MCF 10A (cell line): ENCODE measurements at regions of chr12 and their contacts with region 1.

Region 1: DNA sequence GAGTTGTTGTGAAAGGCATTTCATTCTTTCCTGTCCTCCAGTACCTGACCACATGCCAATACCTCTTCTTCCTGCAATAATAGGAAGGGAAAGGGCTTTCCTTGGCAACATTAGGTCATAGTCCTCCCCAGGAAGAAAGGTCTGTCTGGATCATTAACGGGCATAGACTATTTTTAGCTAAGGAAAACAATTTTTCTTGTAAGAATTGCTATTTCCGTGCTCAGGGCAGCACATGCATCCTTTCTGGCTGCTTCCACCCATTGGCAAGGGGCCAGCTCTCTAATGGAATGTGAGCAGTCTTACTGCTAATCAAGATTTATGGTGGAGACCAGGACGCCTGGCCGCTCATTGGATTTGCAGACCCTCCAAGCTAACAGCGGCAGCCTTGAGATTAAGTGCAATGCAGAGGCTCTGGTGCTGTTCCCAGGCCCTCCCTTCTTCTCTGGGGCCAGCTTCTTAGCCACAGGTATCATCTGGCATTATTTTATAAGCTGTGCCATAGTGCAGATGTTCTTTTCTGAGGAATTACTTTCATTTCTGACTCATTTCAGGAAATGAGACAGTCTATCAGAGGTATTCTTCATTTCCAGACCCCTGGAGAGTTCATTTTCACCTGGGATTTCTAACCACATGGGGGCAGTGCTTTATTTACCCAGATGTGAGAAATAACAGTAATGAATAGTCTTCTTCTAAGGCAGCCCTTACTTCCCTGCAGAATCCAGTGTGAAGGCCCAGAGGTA is 52.9 kb downstream of the ANO6 start:
- DNase-seq: peak; percentile 89
- H3K4me3 Mint-ChIP-seq: peak overlapping the region; percentile 58
- H3K27ac Mint-ChIP-seq: peak overlapping the region; percentile 61
- H3K4me1 Mint-ChIP-seq: peaks cover 21% of the 10 kb centered on the region
- H3K27me3 Mint-ChIP-seq: no peaks in the 10 kb centered on the region
- CTCF ChIP-seq: peak; percentile 63

Region 2: GRCh38 chr12:44532940-44533339 is 735.9 kb before region 1 on chr12:
- CTCF ChIA-PET with region 1: no interaction called
- POLR2A ChIA-PET with region 1: no interaction called
- intact Hi-C with region 1: no loop called
- DNase-seq: no peak
- H3K4me3 Mint-ChIP-seq: no peak overlapping the region
- H3K27ac Mint-ChIP-seq: no peak overlapping the region
- H3K4me1 Mint-ChIP-seq: no peaks in the 10 kb centered on the region
- H3K27me3 Mint-ChIP-seq: peaks cover 22% of the 10 kb centered on the region
- CTCF ChIP-seq: no peak

Region 3: DNA sequence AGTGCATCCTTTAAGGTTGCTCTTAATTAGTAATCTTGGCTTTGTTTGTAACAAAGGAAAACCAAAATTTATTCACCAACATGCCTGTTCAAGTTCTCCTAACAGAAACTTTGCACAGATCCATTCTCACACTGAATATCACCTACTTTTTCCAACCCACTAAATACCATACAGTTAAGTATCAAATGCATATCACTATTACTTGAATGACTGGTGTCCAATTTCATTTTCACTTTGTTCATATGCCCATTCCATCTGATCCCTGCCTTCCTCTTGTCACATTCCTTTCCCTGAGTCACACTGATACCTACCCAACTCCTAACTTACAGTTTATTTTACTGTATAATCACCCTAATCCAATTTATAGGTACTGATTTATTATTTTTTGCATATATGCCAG is 679.1 kb before region 1 on chr12:
- CTCF ChIA-PET with region 1: no interaction called
- POLR2A ChIA-PET with region 1: no interaction called
- intact Hi-C with region 1: no loop called
- DNase-seq: peak; percentile 16
- H3K4me3 Mint-ChIP-seq: no peak overlapping the region
- H3K27ac Mint-ChIP-seq: no peak overlapping the region
- H3K4me1 Mint-ChIP-seq: peaks cover 7% of the 10 kb centered on the region
- H3K27me3 Mint-ChIP-seq: peaks cover 47% of the 10 kb centered on the region
- CTCF ChIP-seq: no peak

Region 4: GRCh38 chr12:44689587-44689986 is 579.3 kb before region 1 on chr12:
- CTCF ChIA-PET with region 1: no interaction called
- POLR2A ChIA-PET with region 1: no interaction called
- intact Hi-C with region 1: no loop called
- DNase-seq: no peak
- H3K4me3 Mint-ChIP-seq: no peak overlapping the region
- H3K27ac Mint-ChIP-seq: no peak overlapping the region
- H3K4me1 Mint-ChIP-seq: no peaks in the 10 kb centered on the region
- H3K27me3 Mint-ChIP-seq: peaks cover 12% of the 10 kb centered on the region
- CTCF ChIP-seq: no peak

Region 5: DNA sequence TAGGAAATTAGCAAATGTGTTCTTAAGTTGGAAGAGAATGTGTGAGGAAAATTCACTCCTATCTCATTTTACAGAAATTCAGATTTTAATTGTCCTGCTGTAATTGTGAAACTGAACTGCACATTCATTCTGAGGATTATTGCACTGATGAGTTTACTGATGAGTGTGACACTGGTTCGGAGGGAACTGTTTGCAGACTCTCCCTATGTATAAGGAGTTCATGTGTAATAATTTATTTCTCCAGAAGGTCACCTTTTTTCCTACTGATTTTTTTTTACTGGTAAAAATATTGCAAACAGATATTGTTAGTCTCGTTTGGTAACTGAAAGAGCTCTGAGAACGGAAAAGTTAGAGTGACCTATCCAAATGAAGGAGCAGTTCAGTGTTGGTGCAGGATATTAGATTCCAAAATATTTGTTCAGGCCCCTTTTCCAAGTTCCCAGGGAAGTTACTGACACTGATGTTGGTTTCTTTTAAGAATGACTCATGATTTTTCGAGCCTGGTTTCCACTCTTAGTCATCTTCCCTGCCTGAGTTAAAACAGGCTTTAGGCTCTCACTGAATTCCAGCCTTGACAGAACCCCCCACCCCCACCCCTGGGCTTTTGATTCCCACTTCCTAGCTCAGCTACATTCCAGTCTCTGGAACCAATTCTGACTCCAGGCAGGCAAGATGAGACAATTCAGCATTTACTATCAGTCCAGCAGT is 34.5 kb before region 1 on chr12:
- CTCF ChIA-PET with region 1: interaction called, 3 read pairs
- POLR2A ChIA-PET with region 1: interaction called, 21 read pairs
- intact Hi-C with region 1: loop called (anchors 2 kb)
- DNase-seq: peak; percentile 96
- H3K4me3 Mint-ChIP-seq: peak overlapping the region; percentile 5
- H3K27ac Mint-ChIP-seq: peak overlapping the region; percentile 77
- H3K4me1 Mint-ChIP-seq: peaks cover 36% of the 10 kb centered on the region
- H3K27me3 Mint-ChIP-seq: no peaks in the 10 kb centered on the region
- CTCF ChIP-seq: no peak

Region 6: GRCh38 chr12:45290204-45290580 is 21.4 kb after region 1 on chr12:
- CTCF ChIA-PET with region 1: interaction called, 11 read pairs
- POLR2A ChIA-PET with region 1: interaction called, 6 read pairs
- intact Hi-C with region 1: no loop called
- DNase-seq: peak; percentile 94
- H3K4me3 Mint-ChIP-seq: peak overlapping the region; percentile 18
- H3K27ac Mint-ChIP-seq: peak overlapping the region; percentile 54
- H3K4me1 Mint-ChIP-seq: peaks cover 18% of the 10 kb centered on the region
- H3K27me3 Mint-ChIP-seq: no peaks in the 10 kb centered on the region
- CTCF ChIP-seq: no peak

Region 7: GRCh38 chr12:45315462-45315861 is 46.6 kb after region 1 on chr12:
- CTCF ChIA-PET with region 1: no interaction called
- POLR2A ChIA-PET with region 1: no interaction called
- intact Hi-C with region 1: no loop called
- DNase-seq: no peak
- H3K4me3 Mint-ChIP-seq: no peak overlapping the region
- H3K27ac Mint-ChIP-seq: no peak overlapping the region
- H3K4me1 Mint-ChIP-seq: no peaks in the 10 kb centered on the region
- H3K27me3 Mint-ChIP-seq: no peaks in the 10 kb centered on the region
- CTCF ChIP-seq: no peak

Region 8: DNA sequence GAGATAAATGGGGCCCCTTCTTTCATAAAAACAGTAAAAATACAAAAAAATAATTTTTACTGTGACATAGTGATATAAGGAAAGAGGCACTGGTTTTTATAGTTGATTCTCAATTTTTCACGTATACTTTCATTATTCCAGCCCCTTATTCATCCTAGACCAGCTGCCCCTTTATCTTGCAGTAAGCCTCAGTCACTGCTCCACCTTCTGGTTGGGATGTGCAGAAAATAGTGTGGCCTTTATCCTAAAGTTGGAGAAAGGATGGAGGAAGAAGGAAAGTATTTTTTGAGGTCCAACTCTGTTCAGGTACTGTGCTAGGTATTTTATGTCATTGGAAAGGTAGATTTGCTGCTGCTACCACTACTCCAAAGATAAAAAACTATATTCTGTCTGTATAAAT is 119.7 kb after region 1 on chr12:
- CTCF ChIA-PET with region 1: interaction called, 25 read pairs
- POLR2A ChIA-PET with region 1: no interaction called
- intact Hi-C with region 1: loop called (anchors 1 kb)
- DNase-seq: peak; percentile 48
- H3K4me3 Mint-ChIP-seq: no peak overlapping the region
- H3K27ac Mint-ChIP-seq: no peak overlapping the region
- H3K4me1 Mint-ChIP-seq: no peaks in the 10 kb centered on the region
- H3K27me3 Mint-ChIP-seq: no peaks in the 10 kb centered on the region
- CTCF ChIP-seq: peak; percentile 50

Region 9: DNA sequence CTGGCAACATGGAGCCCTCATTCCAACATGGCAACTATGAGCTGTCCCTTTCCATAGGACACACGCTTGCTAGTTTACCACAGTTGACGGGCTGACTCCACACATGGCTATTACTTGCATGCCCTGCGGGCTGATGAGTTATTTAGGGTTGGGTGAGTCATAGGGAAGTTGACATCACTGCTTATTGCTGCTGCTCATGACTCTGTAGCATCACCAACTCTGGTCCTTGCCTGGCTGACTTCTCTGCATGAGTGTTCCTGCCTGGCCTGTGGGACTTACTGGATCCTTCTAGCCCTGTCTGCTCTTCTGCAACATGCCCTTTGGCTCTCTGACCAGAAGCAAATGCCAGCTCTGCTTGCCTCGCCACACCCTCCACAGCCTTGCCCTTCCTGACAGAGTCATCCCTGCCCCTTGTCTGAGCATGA is 146.6 kb after region 1 on chr12:
- CTCF ChIA-PET with region 1: no interaction called
- POLR2A ChIA-PET with region 1: no interaction called
- intact Hi-C with region 1: loop called (anchors 2 kb)
- DNase-seq: peak; percentile 98
- H3K4me3 Mint-ChIP-seq: no peak overlapping the region
- H3K27ac Mint-ChIP-seq: peak overlapping the region; percentile 46
- H3K4me1 Mint-ChIP-seq: peaks cover 9% of the 10 kb centered on the region
- H3K27me3 Mint-ChIP-seq: no peaks in the 10 kb centered on the region
- CTCF ChIP-seq: no peak